WTC11 (cell line): ENCODE measurements at regions of chr3 and their contacts with region 1.

Region 1: GRCh38 chr3:60948484-60948883 is 302.8 kb downstream of the FHIT start:
- DNase-seq: no peak
- ATAC-seq: no peak
- H3K4me3 Mint-ChIP-seq: no peak overlapping the region
- H3K27ac Mint-ChIP-seq: no peak overlapping the region
- H3K4me1 Mint-ChIP-seq: 0 out of 2 replicates have a peak, but pooled peaks cover 3% of the 10 kb centered on the region
- H3K27me3 Mint-ChIP-seq: no peaks in the 10 kb centered on the region
- CTCF ChIP-seq: no peak

Region 2: DNA sequence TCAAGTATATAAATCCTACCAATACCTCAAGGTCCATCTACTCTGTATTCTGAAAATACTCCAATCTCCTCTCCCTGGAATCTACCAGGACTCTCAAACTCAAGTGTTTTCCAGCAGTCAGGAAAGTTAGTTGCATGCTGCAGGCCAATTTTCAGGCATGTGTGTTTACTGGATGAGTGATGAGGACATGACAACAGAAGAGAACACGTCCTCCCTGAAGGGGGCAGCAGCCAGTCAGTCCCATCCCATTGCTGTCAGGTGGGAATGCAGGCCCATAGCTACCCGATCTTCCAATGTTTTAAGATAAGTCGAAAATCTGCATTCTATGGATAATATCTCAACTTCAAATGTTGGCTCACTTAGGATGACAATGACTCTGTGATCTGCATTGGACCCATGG is 193.4 kb before region 1 on chr3:
- CTCF ChIA-PET with region 1: interaction called, 10 read pairs
- POLR2A ChIA-PET with region 1: no interaction called
- DNase-seq: peak; percentile 71
- ATAC-seq: peak; percentile 96
- H3K4me3 Mint-ChIP-seq: no peak overlapping the region
- H3K27ac Mint-ChIP-seq: no peak overlapping the region
- H3K4me1 Mint-ChIP-seq: peaks cover 43% of the 10 kb centered on the region
- H3K27me3 Mint-ChIP-seq: peaks cover 2% of the 10 kb centered on the region; the same call in 1 of the 2 replicates
- CTCF ChIP-seq: peak; percentile 43